Posterior vena cava (tissue), 2 donors: ENCODE measurements at regions of chr6 and their contacts with region 1.

Region 1: GRCh38 chr6:94269256-94269655 is 849.9 kb upstream of the EPHA7 start:
- DNase-seq: no peak

Region 2: GRCh38 chr6:94190030-94190429 is 79.2 kb before region 1 on chr6:
- intact Hi-C with region 1: loop called in 1 of 2 experiments (anchors 5 kb)
- DNase-seq: no peak

Region 3: GRCh38 chr6:94372229-94372628 is 103.0 kb after region 1 on chr6:
- intact Hi-C with region 1: no loop called
- DNase-seq: no peak